Activated CD4-positive, alpha-beta memory T cell treated with anti-CD3 and anti-CD28 coated beads, Interleukin-2, amount 10 ng/mL, durations not matched to agents 7 days and 5 days (primary cell): ENCODE measurements at regions of chr11 and their contacts with region 1.

Region 1: DNA sequence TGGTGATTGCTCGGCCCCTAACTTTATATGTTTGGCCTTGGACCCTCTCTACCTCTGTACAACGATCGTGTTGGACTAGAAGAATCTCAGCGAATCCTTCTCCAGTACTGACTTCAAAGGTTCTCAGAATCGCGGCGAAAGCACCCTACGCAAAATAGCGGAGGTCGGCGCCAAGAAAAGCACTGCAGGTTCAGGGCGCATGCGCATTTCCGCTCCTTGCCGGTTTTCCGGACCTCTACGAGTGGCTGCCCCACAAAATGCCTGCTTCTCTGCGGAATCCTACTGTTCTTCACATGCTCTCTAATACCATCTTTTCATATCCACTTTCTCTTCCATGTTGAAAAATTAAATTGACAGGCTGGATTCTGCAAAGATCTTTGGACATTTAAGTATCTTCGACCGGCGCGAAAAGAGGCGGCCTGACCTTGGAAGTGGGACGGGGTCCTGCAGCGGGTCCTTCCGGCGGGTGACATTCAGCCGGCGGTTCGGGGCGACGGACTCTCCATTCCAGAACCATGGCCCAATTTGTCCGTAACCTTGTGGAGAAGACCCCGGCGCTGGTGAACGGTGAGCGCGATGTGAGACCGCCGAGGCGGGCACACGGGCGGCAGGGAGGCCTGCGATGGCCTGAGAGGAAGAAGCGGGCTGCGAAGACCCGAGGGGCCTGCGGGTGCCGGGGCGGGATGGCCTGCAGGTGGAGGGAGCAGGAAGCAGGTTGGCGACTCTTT is at the start of gene ATP5MG:
- DNase-seq: peak; percentile 92
- H3K4me3 Mint-ChIP-seq: peak within 1 kb of the TSS; percentile 85
- H3K27ac Mint-ChIP-seq: peak within 1 kb of the TSS; percentile 97
- H3K4me1 Mint-ChIP-seq: peaks cover 74% of the 10 kb centered on the region
- H3K27me3 Mint-ChIP-seq: no peaks in the 10 kb centered on the region
- total RNA-seq, gene ATP5MG: 251 to 260 TPM

Region 2: DNA sequence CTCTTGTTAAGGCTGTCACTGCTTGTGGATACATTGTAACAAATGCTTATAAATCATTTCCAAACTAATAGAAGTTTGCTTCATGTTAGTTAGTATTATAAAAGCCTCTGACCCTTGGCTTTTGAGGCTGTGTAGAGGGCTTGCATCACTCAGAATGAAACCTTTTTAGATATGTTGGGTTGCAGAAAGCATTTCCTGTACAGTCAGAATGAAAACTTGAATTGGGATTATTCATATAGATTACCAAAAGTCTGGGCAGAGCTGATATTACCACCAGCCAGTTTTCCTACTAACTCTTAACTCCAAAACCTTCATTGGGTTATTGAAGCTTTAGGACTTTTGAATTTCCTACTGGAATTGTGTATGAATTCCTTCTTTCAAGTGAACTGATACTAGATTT is 47.0 kb after region 1 on chr11:
- CTCF ChIA-PET with region 1: no interaction called
- POLR2A ChIA-PET with region 1: interaction called, 16 read pairs
- DNase-seq: no peak
- H3K4me3 Mint-ChIP-seq: no peak overlapping the region
- H3K27ac Mint-ChIP-seq: peak overlapping the region; percentile 65
- H3K4me1 Mint-ChIP-seq: peaks cover 69% of the 10 kb centered on the region
- H3K27me3 Mint-ChIP-seq: no peaks in the 10 kb centered on the region

Region 3: DNA sequence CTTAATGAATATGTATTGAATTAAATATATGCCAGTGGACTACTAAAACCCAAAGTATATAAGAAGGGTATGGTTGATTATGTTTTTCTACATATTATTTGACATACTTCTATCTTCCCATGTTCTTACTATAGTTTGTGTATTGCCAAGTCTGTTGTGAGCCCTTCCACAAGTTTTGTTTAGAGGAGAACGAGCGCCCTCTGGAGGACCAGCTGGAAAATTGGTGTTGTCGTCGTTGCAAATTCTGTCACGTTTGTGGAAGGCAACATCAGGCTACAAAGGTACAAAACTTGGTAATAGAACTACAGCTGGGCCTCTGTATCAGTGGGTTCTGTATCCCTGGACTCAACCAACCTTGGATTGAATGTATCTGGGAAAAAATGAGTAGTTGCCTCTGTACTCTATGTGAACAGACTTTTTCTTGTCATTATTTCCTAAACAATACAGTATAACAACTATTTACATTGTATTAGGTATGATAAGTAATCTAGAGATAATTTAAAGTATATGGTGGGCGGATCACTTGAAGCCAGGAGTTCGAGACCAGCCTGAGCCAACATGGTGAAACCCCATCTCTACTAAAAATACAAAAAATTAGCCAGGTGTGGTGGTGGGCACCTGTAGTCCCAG is 87.3 kb after region 1 on chr11:
- CTCF ChIA-PET with region 1: interaction called, 23 read pairs
- POLR2A ChIA-PET with region 1: interaction called, 4 read pairs
- DNase-seq: peak; percentile 83
- H3K4me3 Mint-ChIP-seq: no peak overlapping the region
- H3K27ac Mint-ChIP-seq: no peak overlapping the region
- H3K4me1 Mint-ChIP-seq: no peaks in the 10 kb centered on the region
- H3K27me3 Mint-ChIP-seq: no peaks in the 10 kb centered on the region